HEK293T (cell line): ENCODE measurements at regions of chr1 and their contacts with region 1.

Region 1: DNA sequence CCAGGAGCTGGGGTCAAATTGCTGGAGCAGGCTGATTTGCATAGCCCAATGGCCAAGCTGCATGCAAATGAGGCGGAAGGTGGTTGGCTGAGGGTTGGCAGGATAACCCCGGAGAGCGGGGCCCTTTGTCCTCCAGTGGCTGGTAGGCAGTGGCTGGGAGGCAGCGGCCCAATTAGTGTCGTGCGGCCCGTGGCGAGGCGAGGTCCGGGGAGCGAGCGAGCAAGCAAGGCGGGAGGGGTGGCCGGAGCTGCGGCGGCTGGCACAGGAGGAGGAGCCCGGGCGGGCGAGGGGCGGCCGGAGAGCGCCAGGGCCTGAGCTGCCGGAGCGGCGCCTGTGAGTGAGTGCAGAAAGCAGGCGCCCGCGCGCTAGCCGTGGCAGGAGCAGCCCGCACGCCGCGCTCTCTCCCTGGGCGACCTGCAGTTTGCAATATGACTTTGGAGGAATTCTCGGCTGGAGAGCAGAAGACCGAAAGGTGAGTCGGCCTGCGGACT is at the start of gene GADD45A:
- DNase-seq: peak; percentile 100

Region 2: DNA sequence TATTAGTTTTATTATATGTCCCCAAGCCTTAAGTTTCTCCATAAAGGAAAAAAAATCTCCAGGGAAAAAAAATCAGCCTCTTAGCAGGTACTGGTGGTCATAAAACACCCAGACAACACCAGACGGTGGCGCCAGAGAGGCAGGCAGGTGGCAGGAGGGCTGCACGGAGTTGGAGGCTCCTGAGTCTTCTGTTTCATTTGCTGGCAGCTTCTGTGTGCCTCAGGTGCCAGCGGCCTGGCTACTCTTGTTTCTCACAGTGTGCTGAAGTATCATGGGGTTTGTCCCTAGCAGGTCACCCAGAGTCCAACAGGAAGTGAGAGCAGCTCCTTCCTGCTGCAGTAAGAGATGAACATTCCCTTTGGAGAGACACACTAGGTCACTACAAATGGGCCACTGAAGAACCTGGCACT is 123.4 kb before region 1 on chr1:
- CTCF ChIA-PET with region 1: interaction called, 7 read pairs
- POLR2A ChIA-PET with region 1: interaction called, 25 read pairs
- DNase-seq: peak; percentile 94

Region 3: GRCh38 chr1:67599085-67599484 is 86.0 kb before region 1 on chr1:
- CTCF ChIA-PET with region 1: no interaction called
- POLR2A ChIA-PET with region 1: no interaction called
- DNase-seq: no peak

Region 4: GRCh38 chr1:67646145-67647035 is 38.7 kb before region 1 on chr1:
- CTCF ChIA-PET with region 1: no interaction called
- POLR2A ChIA-PET with region 1: interaction called, 15 read pairs
- DNase-seq: peak; percentile 52

Region 5: GRCh38 chr1:67674260-67675011 is 10.7 kb before region 1 on chr1:
- CTCF ChIA-PET with region 1: interaction called, 7 read pairs
- POLR2A ChIA-PET with region 1: interaction called, 24 read pairs
- DNase-seq: no peak

Region 6: DNA sequence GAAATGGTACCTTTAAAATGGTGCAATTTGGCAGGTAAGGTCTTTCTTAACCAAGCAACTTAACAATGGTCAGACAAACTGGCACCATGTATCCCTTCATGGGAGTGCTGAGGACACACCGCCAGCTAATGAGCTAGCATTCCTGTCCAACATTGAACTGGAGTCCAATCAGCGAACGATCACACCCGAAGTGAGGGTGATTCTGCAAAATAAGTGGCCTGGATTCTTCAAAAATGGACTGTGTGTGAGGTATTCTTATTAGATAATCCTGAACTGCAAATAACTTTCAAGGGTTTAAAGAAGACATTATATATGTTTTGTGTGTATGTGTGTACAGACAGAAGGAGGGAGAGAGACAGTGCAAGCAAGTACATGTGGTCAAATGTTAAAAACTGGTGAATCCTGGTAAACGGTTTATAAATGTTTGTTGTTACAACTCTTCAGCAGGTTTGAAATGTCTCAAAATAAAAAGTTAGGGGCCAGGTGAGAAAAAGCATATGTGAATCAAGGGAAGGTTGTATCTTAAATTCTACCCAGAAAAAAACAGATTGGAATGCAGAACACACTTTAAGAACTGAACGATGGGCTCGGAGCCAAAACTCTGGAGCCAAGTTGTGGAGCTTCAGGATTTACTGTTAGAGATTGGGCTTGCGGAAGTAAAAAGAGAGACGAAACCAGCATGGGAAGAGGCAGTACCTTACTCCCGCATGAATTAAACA is 20.8 kb after region 1 on chr1:
- CTCF ChIA-PET with region 1: interaction called, 8 read pairs
- POLR2A ChIA-PET with region 1: interaction called, 42 read pairs
- DNase-seq: no peak

Region 7: DNA sequence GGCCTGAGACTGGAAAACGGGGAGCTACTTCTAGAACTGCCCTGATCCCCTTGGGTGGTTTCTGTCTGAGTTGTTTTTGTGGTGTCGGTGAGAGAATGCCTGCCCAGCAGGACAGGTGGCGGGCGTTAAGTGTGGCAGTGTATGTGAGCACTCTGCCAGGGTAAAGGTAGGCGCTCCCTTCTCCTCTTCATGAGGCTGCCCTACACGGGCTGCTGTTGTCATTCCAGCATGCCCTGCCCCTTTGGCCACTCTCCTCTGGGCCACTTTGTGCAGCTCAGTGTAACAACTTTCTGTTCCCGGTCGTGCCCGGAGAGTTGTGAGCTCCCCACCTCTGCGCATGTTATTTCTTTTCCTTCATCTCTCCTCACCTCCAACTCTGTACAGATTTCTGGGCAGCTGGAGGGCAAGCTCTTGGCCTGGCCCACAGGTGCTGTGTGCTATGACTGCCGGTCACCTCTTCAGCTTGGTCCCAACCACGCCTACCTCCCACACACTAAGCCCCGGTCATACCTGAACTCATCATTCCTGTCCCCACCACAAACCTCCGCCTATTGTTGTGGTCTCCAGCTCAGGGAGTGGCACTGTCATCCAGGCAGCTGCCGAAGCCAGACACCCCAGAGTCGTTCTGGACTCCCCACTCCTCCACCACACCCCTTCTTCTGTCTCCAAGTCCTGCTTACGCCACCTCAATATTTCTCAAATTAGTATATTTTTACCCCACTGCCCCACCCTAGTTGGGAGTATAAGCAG is 68.8 kb after region 1 on chr1:
- CTCF ChIA-PET with region 1: no interaction called
- POLR2A ChIA-PET with region 1: interaction called, 22 read pairs
- DNase-seq: no peak

Region 8: GRCh38 chr1:67814121-67814772 is 129.1 kb after region 1 on chr1:
- CTCF ChIA-PET with region 1: no interaction called
- POLR2A ChIA-PET with region 1: no interaction called
- DNase-seq: no peak